Activated CD8-positive, alpha-beta memory T cell treated with anti-CD3 and anti-CD28 coated beads, Interleukin-2, amount 10 ng/mL, durations not matched to agents 7 days and 5 days (primary cell): ENCODE measurements at regions of chr21 and their contacts with region 1.

Region 1: GRCh38 chr21:45478115-45478801 is 64.0 kb downstream of the SLC19A1 start:
- DNase-seq: peak; percentile 87
- ATAC-seq: peak; percentile 72
- H3K4me3 Mint-ChIP-seq: peak overlapping the region; percentile 75
- H3K27ac Mint-ChIP-seq: peak overlapping the region; percentile 94
- H3K4me1 Mint-ChIP-seq: peaks cover 34% of the 10 kb centered on the region
- H3K27me3 Mint-ChIP-seq: no peaks in the 10 kb centered on the region

Region 2: GRCh38 chr21:45319461-45320211 is 158.6 kb before region 1 on chr21:
- CTCF ChIA-PET with region 1: no interaction called
- DNase-seq: no peak
- ATAC-seq: no peak
- H3K4me3 Mint-ChIP-seq: no peak overlapping the region
- H3K27ac Mint-ChIP-seq: no peak overlapping the region
- H3K4me1 Mint-ChIP-seq: no peaks in the 10 kb centered on the region
- H3K27me3 Mint-ChIP-seq: peaks cover 16% of the 10 kb centered on the region

Region 3: DNA sequence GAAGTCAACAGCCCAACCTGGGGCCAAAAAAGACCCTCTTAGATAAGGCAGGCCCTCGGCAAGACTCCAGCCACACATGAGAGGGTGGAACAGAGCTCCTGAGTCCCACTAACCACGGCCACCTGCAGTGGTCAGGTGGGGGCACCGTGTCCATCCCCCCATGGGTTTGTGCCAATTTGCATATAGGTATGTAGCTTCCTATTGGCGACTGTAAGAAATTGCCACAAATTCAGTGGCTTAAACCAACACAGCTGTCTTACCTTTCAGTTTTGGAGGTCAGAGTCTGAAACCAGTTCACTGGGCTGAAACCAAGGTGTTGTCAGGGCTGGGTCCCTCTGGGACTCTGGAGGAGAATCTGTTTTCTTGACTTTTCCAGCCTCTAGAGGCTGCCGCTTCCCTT is 13.9 kb before region 1 on chr21:
- CTCF ChIA-PET with region 1: interaction called, 10 read pairs
- DNase-seq: no peak
- ATAC-seq: no peak
- H3K4me3 Mint-ChIP-seq: no peak overlapping the region
- H3K27ac Mint-ChIP-seq: no peak overlapping the region
- H3K4me1 Mint-ChIP-seq: no peaks in the 10 kb centered on the region
- H3K27me3 Mint-ChIP-seq: peaks cover 16% of the 10 kb centered on the region

Region 4: DNA sequence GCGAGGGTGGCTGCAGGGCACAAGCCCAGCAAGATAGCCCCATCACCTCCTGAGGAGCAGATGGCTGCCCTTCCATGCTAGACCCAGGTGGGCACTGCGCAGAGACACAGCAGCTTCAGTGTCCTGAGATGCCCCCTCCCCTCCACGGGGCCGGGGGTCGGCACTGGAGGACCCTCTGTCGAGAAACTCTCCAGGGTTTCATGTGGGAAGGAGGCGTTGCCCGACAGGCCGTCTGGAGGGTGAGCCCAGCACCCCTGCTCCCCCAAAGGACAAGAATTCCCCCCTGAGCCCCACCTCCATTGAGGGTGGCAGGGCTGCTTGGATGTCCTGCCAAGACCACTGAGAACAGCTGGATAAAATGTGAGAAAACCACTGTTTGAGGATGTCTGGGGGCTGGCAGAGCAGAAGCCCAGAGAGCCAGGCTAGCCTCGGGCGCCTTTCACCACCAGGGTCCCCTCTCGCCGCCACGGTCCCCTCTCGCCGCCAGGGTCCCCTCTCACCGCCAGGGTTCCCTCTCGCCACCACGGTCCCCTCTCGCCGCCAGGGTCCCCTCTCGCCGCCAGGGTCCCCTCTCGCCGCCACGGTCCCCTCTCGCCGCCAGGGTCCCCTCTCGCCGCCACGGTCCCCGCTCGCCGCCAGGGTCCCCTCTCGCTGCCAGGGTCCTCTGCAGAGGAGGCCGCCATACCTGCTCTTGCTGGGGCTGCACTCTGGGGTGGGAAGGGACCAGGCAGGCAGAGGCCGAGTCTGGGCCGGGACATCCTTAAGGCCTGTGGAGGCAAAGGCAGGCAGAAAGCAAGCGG is 19.8 kb after region 1 on chr21:
- CTCF ChIA-PET with region 1: no interaction called
- DNase-seq: no peak
- ATAC-seq: no peak
- H3K4me3 Mint-ChIP-seq: no peak overlapping the region
- H3K27ac Mint-ChIP-seq: no peak overlapping the region
- H3K4me1 Mint-ChIP-seq: peaks cover 1% of the 10 kb centered on the region
- H3K27me3 Mint-ChIP-seq: no peaks in the 10 kb centered on the region

Region 5: GRCh38 chr21:45721671-45722070 is 243.4 kb after region 1 on chr21:
- CTCF ChIA-PET with region 1: no interaction called
- DNase-seq: no peak
- ATAC-seq: no peak
- H3K4me3 Mint-ChIP-seq: no peak overlapping the region
- H3K27ac Mint-ChIP-seq: no peak overlapping the region
- H3K4me1 Mint-ChIP-seq: peaks cover 2% of the 10 kb centered on the region
- H3K27me3 Mint-ChIP-seq: peaks cover 20% of the 10 kb centered on the region